ENCODE measurements at regions of chr10 and their contacts with region 1.

Region 1: GRCh38 chr10:128064108-128064969 is 61.9 kb downstream of the MKI67 start:
- DNase-seq: peak in 8 of 9 experiments; percentile 29 to 90 (median 68)
- ATAC-seq: peak; percentile 77
- H3K4me3 ChIP-seq: peak overlapping the region; percentile 36 to 49
- H3K4me3 Mint-ChIP-seq: peak overlapping the region; percentile 74
- H3K27ac ChIP-seq: peak overlapping the region; percentile 33 to 92
- H3K27ac Mint-ChIP-seq: peak overlapping the region; percentile 81
- H3K4me1 ChIP-seq: peaks cover 63% of the 10 kb centered on the region
- H3K4me1 Mint-ChIP-seq: peaks cover 80% of the 10 kb centered on the region
- H3K27me3 ChIP-seq: no peaks in the 10 kb centered on the region
- H3K27me3 Mint-ChIP-seq: no peaks in the 10 kb centered on the region
- CTCF ChIP-seq: no peak

Region 2: DNA sequence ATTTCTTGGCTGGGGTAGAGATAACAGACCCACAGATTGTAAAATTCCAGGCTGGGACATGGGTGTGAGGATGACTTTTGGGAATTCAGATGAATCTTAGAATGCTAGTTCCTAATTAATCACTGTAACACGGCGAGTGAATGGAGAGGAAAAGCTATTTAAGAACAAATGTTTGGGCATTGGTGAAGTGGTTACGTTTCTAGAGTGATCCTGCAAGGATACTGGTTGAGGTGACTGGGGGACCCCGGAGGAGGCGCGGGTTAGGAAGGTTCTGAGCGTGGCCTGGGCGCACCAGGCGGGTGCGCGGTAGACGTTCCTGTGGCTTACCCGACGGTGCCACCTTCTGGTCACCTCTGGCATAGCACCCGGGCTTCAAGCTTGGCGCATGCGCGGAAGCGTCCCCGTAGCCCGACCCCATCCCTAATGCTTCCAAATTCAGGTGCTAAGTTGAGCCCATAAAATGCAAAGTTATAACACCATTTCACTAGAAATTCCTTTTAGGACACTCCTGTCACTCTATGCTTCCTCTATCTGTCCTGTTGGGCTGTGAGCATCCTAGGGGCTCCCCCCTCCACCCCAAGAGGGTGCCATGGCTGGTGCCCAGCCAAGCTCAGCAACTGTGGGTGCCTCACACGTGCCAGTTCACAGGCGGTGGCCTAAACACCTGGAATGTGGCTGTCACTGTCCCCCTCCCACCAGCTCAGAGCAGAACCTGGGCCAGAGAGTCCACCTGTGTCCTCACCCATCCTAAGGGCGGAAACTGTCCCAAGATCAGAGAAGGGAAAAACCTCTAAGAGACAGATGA is 53.0 kb before region 1 on chr10:
- CTCF ChIA-PET with region 1: interaction called, 54 read pairs
- POLR2A ChIA-PET with region 1: interaction called, 3 read pairs
- intact Hi-C with region 1: loop called in 1 of 2 experiments (anchors 1 kb)
- DNase-seq: peak; percentile 78 to 94 (median 88)
- ATAC-seq: peak; percentile 100
- H3K4me3 ChIP-seq: no peak overlapping the region
- H3K4me3 Mint-ChIP-seq: peak overlapping the region; percentile 15
- H3K27ac ChIP-seq: no peak overlapping the region
- H3K27ac Mint-ChIP-seq: no peak overlapping the region
- H3K4me1 ChIP-seq: peaks cover 6% of the 10 kb centered on the region
- H3K4me1 Mint-ChIP-seq: peaks cover 8% of the 10 kb centered on the region
- H3K27me3 ChIP-seq: no peaks in the 10 kb centered on the region
- H3K27me3 Mint-ChIP-seq: peaks cover 3% of the 10 kb centered on the region
- CTCF ChIP-seq: peak; percentile 88

Region 3: GRCh38 chr10:128035557-128035973 is 28.8 kb before region 1 on chr10:
- CTCF ChIA-PET with region 1: interaction called, 396 read pairs
- POLR2A ChIA-PET with region 1: interaction called, 21 read pairs
- intact Hi-C with region 1: loop called (anchors 1 kb)
- DNase-seq: peak; percentile 40 to 78 (median 70)
- ATAC-seq: peak; percentile 78
- H3K4me3 ChIP-seq: no peak overlapping the region
- H3K4me3 Mint-ChIP-seq: no peak overlapping the region
- H3K27ac ChIP-seq: no peak overlapping the region
- H3K27ac Mint-ChIP-seq: no peak overlapping the region
- H3K4me1 ChIP-seq: no peaks in the 10 kb centered on the region
- H3K4me1 Mint-ChIP-seq: no peaks in the 10 kb centered on the region
- H3K27me3 ChIP-seq: no peaks in the 10 kb centered on the region
- H3K27me3 Mint-ChIP-seq: no peaks in the 10 kb centered on the region
- CTCF ChIP-seq: peak; percentile 73

Region 4: DNA sequence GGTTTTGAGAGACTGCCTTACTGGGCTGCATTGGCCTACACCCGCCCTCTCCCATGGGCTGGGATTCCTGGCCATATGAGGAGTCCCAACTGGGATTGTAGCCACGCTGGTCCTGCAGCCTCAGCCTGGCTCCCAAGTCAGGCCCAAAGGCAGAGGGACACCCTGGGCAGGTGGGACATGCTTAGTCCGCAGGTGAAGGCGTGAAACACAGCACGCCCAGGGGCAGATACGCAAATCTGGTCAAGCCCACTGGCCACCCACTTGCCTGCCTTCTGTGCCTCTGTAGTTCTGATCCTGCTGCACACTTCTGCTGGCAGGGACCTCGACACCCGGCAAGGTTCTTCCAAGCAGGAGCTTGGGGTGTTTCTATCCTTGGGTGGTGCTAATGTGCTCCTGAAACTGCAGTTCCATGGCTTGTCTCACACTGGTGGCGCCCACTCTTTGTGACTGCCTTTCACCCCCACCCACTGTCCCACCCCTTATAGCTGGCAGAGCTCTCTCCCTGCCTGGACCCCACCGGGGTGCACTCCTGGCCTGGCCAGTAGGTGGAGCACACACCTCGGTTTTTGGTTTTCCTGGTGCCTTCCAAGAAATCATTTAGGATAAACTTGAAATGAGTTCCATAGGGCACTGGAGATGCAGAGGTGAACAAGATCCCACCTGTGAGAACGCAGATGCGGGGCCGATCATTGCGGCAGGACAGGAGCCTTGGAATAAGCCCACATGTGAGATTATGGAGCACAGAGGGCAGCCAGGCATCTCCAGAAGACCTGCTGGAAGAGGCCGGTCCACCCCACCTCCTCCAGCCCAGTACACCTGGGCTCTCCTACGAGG is 14.0 kb after region 1 on chr10:
- CTCF ChIA-PET with region 1: interaction called, 13 read pairs
- POLR2A ChIA-PET with region 1: no interaction called
- intact Hi-C with region 1: no loop called
- DNase-seq: peak in 5 of 9 experiments; percentile 29 to 72 (median 51)
- ATAC-seq: peak; percentile 78
- H3K4me3 ChIP-seq: no peak overlapping the region
- H3K4me3 Mint-ChIP-seq: no peak overlapping the region
- H3K27ac ChIP-seq: no peak overlapping the region
- H3K27ac Mint-ChIP-seq: no peak overlapping the region
- H3K4me1 ChIP-seq: no peaks in the 10 kb centered on the region
- H3K4me1 Mint-ChIP-seq: peaks cover 6% of the 10 kb centered on the region
- H3K27me3 ChIP-seq: no peaks in the 10 kb centered on the region
- H3K27me3 Mint-ChIP-seq: no peaks in the 10 kb centered on the region
- CTCF ChIP-seq: peak; percentile 44

Region 5: DNA sequence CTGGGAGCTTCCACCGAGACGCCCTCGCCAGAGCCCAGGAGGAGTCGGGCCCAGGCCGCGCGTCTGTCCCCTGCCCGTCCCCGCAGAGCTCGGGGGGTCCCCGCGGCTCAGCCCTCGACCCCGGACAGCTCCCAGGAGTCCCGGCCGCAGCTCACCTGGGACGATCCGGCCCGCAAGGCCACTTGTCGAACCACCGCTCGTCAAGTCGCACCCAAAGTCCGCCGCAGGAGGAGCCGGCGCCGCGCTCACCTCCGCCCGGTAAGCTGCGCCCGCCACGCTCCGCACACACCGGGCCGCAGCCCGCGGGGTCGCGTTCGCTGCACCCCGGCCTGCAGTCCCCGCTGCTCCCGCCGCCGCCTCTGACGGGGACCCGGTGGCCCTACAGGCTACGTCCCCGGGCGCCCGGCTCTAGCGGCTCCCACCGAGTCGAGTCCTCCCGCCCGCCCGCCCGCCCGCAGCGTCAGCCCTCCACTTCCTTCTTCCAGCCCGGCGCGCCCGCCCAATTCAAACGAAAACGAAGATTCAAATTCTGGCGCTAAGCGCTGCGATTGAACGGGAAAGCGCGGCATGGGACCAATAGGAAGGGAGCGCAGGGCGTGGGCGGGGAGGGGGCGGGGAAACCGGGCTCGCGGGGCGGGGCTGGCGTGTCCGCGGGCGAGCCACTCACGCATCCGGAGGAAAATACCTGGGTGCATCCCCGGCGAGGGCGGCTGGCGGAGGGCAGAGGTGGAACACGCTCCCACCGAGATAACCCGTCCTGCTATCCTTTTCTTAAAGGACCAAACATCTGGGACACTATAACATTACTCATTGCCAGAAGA is 61.8 kb after region 1 on chr10 and contains the start of gene MKI67:
- CTCF ChIA-PET with region 1: interaction called, 5 read pairs
- POLR2A ChIA-PET with region 1: no interaction called
- intact Hi-C with region 1: loop called in 1 of 2 experiments (anchors 5 kb)
- DNase-seq: peak; percentile 74 to 95 (median 89)
- ATAC-seq: peak; percentile 94
- H3K4me3 ChIP-seq: peak within 1 kb of the TSS; percentile 75 to 84
- H3K4me3 Mint-ChIP-seq: peak within 1 kb of the TSS; percentile 87
- H3K27ac ChIP-seq: peak within 1 kb of the TSS; percentile 29 to 36
- H3K27ac Mint-ChIP-seq: no peak within 1 kb of the TSS
- H3K4me1 ChIP-seq: peaks cover 17% of the 10 kb centered on the region
- H3K4me1 Mint-ChIP-seq: peaks cover 26% of the 10 kb centered on the region
- H3K27me3 ChIP-seq: peaks cover 11 to 14% of the 10 kb centered on the region in 2 experiments
- H3K27me3 Mint-ChIP-seq: peaks cover 30% of the 10 kb centered on the region
- CTCF ChIP-seq: no peak
- total RNA-seq, gene MKI67: 1.5 to 1.9 TPM